ENCODE measurements at regions of chr20 and their contacts with region 1.

Region 1: DNA sequence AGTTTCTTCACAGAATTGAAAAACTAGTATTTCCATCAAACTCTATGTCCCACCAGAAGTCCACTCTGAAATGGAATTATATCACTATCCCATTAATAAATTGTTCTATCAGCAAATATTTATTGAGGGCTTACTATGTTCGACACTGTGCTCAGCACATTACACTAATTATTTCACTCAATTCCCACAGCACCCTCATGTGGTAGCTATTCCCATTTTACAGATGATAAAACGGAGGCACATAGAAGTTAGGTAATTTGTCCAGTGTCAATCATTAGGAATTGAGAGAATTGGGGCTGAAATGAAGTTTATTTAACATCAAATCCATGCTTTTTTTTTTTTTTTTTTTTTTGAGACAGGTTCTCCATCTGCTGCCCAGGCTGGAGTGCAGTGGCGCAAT is 52.5 kb downstream of the MKKS start:
- DNase-seq: no peak
- ATAC-seq: peak; percentile 87
- H3K4me3 ChIP-seq: no peak overlapping the region
- H3K27ac ChIP-seq: no peak overlapping the region
- H3K4me1 ChIP-seq: no peaks in the 10 kb centered on the region
- H3K27me3 ChIP-seq: no peaks in the 10 kb centered on the region
- CTCF ChIP-seq: peak in 1 of 3 experiments; percentile 19; a peak in 2 of 6 replicates
- EP300 ChIP-seq: no peak
- POLR2A ChIP-seq: no peak
- RAD21 ChIP-seq: no peak

Region 2: DNA sequence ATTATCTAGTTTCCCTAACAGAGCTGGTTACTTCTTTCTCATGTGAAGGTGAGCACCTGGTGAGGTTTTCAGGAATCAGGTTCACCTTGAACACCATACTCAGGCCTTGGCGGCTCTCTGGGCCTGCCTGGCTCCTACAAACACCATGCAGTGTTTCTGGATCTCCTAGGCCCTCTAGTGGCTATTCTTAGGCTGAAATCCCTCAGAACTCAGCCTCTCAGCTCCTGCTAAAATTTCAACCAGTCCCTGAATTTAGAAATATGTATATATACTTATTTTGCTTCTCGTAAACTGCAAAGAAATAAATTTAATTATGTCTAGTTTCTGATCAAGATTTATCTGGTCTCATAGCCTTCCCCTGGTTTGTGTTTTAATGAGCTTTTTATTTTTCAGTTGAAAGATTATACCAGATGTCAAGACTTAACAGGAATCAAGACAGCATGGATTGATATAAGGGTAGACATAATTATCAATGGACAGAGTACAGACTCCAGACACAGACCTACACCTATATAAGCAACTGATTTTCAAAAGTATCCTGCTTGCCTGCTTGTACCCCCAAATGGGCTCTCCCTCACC is 290.8 kb before region 1 on chr20:
- CTCF ChIA-PET with region 1: interaction called, 10 read pairs
- POLR2A ChIA-PET with region 1: interaction called, 3 read pairs
- RAD21 ChIA-PET with region 1: interaction called, 5 read pairs
- SMC1A ChIA-PET with region 1: interaction called, 19 read pairs
- in situ Hi-C with region 1: no loop called
- intact Hi-C with region 1: no loop called
- DNase-seq: no peak
- ATAC-seq: peak; percentile 92
- H3K4me3 ChIP-seq: no peak overlapping the region
- H3K27ac ChIP-seq: no peak overlapping the region
- H3K4me1 ChIP-seq: no peaks in the 10 kb centered on the region
- H3K27me3 ChIP-seq: no peaks in the 10 kb centered on the region
- CTCF ChIP-seq: peak; percentile 69 to 74 (median 69)
- EP300 ChIP-seq: no peak
- POLR2A ChIP-seq: no peak
- RAD21 ChIP-seq: peak; percentile 65

Region 3: DNA sequence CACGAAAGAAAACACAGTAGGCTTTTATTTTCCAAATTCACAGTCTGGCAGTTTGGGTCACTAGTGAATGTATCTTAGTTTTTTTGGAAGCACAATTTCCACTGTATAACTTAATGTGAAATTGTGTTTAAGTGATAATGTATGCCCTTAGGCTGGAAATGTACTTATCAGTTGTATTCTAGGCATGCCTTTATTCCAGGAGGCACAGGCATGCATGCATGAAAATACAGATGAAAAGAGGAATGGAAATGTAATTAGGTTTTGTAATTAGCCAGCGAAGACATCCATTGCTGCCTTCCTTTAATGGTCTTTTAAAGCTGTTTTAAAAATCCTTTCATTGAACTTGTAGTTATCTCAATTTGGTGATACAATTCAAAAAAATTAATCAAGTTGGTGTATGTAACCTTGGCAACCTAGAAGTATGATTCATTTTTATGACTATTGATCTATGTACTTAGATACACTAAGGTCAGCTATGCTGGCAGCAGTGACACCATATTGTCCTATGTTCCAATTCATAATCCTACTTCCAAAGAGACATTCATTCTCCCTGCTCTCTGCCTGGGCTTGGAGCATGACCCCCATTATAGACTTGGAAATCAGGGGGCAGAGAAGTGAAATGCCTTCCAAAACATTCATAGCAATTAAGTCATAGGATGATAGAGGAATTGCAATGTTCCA is 89.8 kb before region 1 on chr20:
- CTCF ChIA-PET with region 1: no interaction called
- POLR2A ChIA-PET with region 1: no interaction called
- RAD21 ChIA-PET with region 1: no interaction called
- SMC1A ChIA-PET with region 1: no interaction called
- in situ Hi-C with region 1: no loop called
- intact Hi-C with region 1: no loop called
- DNase-seq: no peak
- ATAC-seq: no peak
- H3K4me3 ChIP-seq: no peak overlapping the region
- H3K27ac ChIP-seq: no peak overlapping the region
- H3K4me1 ChIP-seq: no peaks in the 10 kb centered on the region
- H3K27me3 ChIP-seq: no peaks in the 10 kb centered on the region
- CTCF ChIP-seq: no peak
- EP300 ChIP-seq: no peak
- POLR2A ChIP-seq: no peak
- RAD21 ChIP-seq: no peak

Region 4: GRCh38 chr20:10347086-10347880 is 34.2 kb before region 1 on chr20:
- CTCF ChIA-PET with region 1: interaction called, 20 read pairs
- POLR2A ChIA-PET with region 1: no interaction called
- RAD21 ChIA-PET with region 1: interaction called, 12 read pairs
- SMC1A ChIA-PET with region 1: interaction called, 26 read pairs
- in situ Hi-C with region 1: no loop called
- intact Hi-C with region 1: no loop called
- DNase-seq: no peak
- ATAC-seq: no peak
- H3K4me3 ChIP-seq: no peak overlapping the region
- H3K27ac ChIP-seq: no peak overlapping the region
- H3K4me1 ChIP-seq: peaks cover 12% of the 10 kb centered on the region
- H3K27me3 ChIP-seq: no peaks in the 10 kb centered on the region
- CTCF ChIP-seq: no peak
- EP300 ChIP-seq: no peak
- POLR2A ChIP-seq: no peak
- RAD21 ChIP-seq: no peak

Region 5: DNA sequence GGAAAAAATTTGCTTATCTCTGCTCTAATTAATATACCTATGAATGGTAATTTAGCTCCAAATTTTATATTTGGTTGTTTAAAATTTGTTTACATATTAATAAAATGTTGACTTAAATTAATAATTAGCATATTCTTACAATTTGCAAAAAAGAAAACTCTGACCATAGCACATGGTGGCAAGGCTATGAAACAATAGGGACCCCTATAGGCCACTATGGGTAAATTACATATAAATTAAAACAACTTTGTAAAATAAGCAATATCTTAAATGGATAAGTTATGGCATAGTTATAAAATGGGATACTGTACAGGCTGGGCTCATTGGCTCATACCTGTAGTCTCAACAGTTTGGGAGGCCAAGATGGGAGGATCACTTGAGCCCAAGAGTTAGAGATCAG is 23.5 kb before region 1 on chr20:
- CTCF ChIA-PET with region 1: interaction called, 20 read pairs
- POLR2A ChIA-PET with region 1: interaction called, 3 read pairs
- RAD21 ChIA-PET with region 1: interaction called, 6 read pairs
- SMC1A ChIA-PET with region 1: interaction called, 25 read pairs
- in situ Hi-C with region 1: no loop called
- intact Hi-C with region 1: no loop called
- DNase-seq: no peak
- ATAC-seq: no peak
- H3K4me3 ChIP-seq: no peak overlapping the region
- H3K27ac ChIP-seq: no peak overlapping the region
- H3K4me1 ChIP-seq: no peaks in the 10 kb centered on the region
- H3K27me3 ChIP-seq: no peaks in the 10 kb centered on the region
- CTCF ChIP-seq: no peak
- EP300 ChIP-seq: no peak
- POLR2A ChIP-seq: no peak
- RAD21 ChIP-seq: no peak

Region 6: GRCh38 chr20:10412591-10413408 is 31.3 kb after region 1 on chr20:
- CTCF ChIA-PET with region 1: interaction called, 13 read pairs
- POLR2A ChIA-PET with region 1: interaction called, 4 read pairs
- RAD21 ChIA-PET with region 1: interaction called, 5 read pairs
- SMC1A ChIA-PET with region 1: interaction called, 5 read pairs
- in situ Hi-C with region 1: no loop called
- intact Hi-C with region 1: no loop called
- DNase-seq: no peak
- ATAC-seq: peak; percentile 85
- H3K4me3 ChIP-seq: no peak overlapping the region
- H3K27ac ChIP-seq: no peak overlapping the region
- H3K4me1 ChIP-seq: peaks cover 8% of the 10 kb centered on the region
- H3K27me3 ChIP-seq: no peaks in the 10 kb centered on the region
- CTCF ChIP-seq: peak; percentile 19 to 32 (median 20); a peak in 1 of 6 replicates
- EP300 ChIP-seq: peak; percentile 26 to 53; a peak in 2 of 4 replicates
- POLR2A ChIP-seq: no peak
- RAD21 ChIP-seq: no peak